Gastrocnemius medialis (tissue), 4 donors: ENCODE measurements at regions of chr16 and their contacts with region 1.

Region 1: DNA sequence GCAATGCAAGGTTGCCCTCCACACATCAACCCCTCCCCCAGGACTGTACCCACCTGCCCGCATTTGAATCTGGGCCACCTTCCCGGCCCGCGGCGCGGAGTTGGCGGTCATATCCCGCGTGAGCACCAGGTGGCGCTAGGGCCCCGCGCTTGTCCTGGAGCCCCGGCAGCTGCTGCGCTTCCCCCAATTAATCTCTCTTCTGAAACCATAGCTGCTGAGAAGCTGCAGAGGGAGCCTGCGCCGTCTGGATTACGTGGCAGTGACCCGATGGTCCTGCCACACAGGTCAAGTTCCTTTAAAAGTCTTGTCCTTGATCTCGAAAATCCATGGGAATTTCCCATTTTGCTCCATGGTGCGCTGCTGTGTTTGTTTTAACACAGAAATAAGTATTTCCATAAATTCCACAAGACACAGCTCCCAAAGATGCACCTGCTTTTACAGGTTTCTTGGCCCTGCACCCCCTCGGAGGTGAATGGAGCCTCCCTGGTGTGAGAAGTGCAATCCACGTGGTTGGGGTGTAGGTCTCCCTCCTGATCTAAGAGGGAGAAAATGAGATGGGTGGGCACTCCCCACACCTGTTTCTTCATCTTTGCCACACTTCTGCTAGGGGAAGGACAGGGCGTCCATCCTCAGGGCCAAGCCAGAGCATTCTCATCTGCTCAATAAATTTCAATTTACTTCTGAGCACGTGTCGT is 22.1 kb downstream of the COX4I1 start:
- DNase-seq: peak; percentile 26 to 39
- ATAC-seq: peak; percentile 52 to 56
- H3K4me3 ChIP-seq: no peak overlapping the region
- H3K27ac ChIP-seq: no peak overlapping the region
- H3K4me1 ChIP-seq: no peaks in the 10 kb centered on the region
- H3K27me3 ChIP-seq: peaks cover 0 to 18% (median 6%) of the 10 kb centered on the region in 3 donors
- CTCF ChIP-seq: peak; percentile 77 to 96 (median 89)
- POLR2A ChIP-seq: no peak

Region 2: GRCh38 chr16:84423416-84423837 is 1398.2 kb before region 1 on chr16:
- in situ Hi-C with region 1: no loop called
- intact Hi-C with region 1: no loop called
- DNase-seq: no peak
- ATAC-seq: no peak
- H3K4me3 ChIP-seq: no peak overlapping the region
- H3K27ac ChIP-seq: no peak overlapping the region
- H3K4me1 ChIP-seq: no peaks in the 10 kb centered on the region
- H3K27me3 ChIP-seq: peaks cover 0 to 3% (median 2%) of the 10 kb centered on the region in 3 donors
- CTCF ChIP-seq: no peak
- POLR2A ChIP-seq: no peak

Region 3: DNA sequence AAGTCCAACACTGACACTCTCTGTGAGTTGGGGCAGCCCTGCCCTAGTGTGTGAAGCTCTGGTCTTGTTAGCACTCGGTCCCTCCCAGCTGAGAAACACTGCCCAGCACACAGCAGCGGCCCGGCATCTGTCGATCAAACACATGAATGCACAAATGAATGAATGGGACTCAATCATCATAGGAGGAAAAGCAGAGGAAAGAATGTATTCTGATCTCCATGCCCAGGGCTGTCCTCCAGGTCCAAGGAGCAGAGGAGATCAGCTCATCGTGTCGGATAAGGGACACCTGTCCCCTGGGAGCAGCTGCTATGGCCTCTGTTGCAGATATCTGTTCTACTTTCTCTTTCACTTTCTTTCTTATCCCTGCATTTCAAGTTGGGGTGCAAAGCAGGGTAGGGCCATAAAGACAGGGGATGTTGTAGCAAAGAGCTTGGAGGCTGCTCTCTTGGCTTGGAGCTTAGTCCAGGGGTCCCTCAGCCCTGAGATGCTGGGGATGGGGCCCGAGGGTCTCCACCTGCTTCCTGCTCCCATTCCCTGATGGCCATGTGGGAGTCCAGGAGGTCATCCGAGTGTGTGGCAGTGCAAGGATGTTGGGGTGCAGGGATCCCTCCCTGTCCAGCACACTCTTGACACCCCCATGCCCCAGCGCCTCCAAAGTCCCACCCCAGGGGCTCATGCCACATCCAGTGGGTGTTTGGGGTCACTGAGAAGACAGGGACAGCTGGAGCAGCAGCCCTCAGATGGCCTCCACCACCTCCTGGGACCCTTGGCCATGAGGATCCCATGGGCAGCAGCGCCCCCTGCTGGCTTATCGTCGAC is 165.6 kb after region 1 on chr16:
- in situ Hi-C with region 1: loop called in 3 of 4 experiments (anchors 10 kb)
- intact Hi-C with region 1: loop called (anchors 2 kb)
- DNase-seq: no peak
- ATAC-seq: no peak
- H3K4me3 ChIP-seq: no peak overlapping the region
- H3K27ac ChIP-seq: no peak overlapping the region
- H3K4me1 ChIP-seq: no peaks in the 10 kb centered on the region
- H3K27me3 ChIP-seq: peaks cover 0 to 31% (median 6%) of the 10 kb centered on the region in 3 donors
- CTCF ChIP-seq: peak in 2 of 5 experiments; percentile 17 to 44
- POLR2A ChIP-seq: no peak

Region 4: GRCh38 chr16:86016201-86016871 is 194.7 kb after region 1 on chr16:
- in situ Hi-C with region 1: loop called (anchors 5 to 10 kb)
- intact Hi-C with region 1: loop called (anchors 1 kb)
- DNase-seq: no peak
- ATAC-seq: peak in 1 of 2 donors; percentile 36
- H3K4me3 ChIP-seq: no peak overlapping the region
- H3K27ac ChIP-seq: no peak overlapping the region
- H3K4me1 ChIP-seq: no peaks in the 10 kb centered on the region
- H3K27me3 ChIP-seq: peaks cover 0 to 7% (median 0%) of the 10 kb centered on the region in 3 donors
- CTCF ChIP-seq: peak; percentile 22 to 68 (median 43)
- POLR2A ChIP-seq: no peak